ENCODE measurements at regions of chr13 and their contacts with region 1.

Region 1: GRCh38 chr13:111114362-111115060 is 599 bp upstream of the ARHGEF7 start:
- DNase-seq: peak; percentile 69 to 80
- ATAC-seq: peak; percentile 74 to 81 (median 78)
- H3K4me3 ChIP-seq: peak overlapping the region; percentile 87
- H3K27ac ChIP-seq: peak overlapping the region; percentile 90
- H3K4me1 ChIP-seq: peaks cover 3% of the 10 kb centered on the region
- H3K27me3 ChIP-seq: no peaks in the 10 kb centered on the region
- CTCF ChIP-seq: no peak

Region 2: DNA sequence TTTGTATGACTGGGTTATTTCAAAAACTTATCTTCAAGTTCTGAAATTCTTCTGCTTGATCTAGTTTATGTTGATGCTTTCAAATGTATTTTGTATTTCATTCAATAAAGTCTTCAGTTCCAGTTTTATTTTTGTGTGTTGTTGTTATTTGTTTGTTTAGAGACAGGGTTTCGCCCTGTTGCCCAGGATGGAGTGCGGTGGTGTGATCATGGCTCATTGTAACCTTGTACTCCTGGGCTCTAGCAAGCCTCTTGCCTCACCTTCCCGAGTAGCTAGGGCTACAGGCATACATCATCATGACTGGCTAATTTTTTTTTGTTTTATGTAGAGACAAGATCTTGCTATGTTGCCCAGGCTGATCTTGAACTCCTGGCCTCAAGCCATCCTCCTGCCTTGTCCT is 39.7 kb before region 1 on chr13:
- intact Hi-C with region 1: loop called in 1 of 2 experiments (anchors 5 kb)
- DNase-seq: no peak
- ATAC-seq: no peak
- H3K4me3 ChIP-seq: no peak overlapping the region
- H3K27ac ChIP-seq: no peak overlapping the region
- H3K4me1 ChIP-seq: no peaks in the 10 kb centered on the region
- H3K27me3 ChIP-seq: peaks cover 0 to 2% (median 0%) of the 10 kb centered on the region in 3 donors
- CTCF ChIP-seq: no peak

Region 3: DNA sequence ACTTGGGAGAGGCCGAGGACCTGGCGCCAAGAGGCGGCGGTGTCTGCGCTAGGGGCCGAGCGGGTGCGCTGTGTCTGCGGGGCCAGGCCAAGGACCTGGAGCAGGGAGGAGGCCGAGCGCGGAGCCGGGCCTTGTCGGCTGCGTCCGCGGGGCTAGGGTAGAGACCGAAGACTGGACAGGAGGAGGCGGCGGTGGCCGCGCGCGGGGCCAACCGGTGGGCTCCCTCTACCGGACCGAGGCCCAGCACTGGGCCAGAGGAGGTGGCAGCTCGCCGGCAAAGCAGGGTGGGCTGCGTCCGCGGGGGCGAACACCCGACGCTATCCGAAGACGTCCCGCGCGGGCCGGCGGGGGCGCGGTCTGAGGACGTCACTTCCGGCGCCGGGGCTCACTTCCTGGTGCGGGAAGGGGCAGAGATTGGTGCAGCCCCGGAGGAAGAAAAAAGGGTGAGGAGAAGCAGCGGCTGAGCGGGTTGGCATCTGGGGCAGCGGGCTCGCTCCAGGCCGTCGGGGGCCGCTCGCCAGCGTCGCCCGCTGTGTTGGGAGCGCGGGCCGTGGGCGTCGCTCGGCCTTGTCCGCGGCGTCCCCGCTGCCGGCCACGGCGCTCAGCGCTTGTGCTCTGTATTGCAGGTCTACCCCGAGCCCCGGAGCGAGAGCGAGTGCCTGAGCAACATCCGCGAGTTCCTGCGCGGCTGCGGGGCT is 38.9 kb after region 1 on chr13:
- intact Hi-C with region 1: loop called in 1 of 2 experiments (anchors 5 kb)
- DNase-seq: peak; percentile 95 to 97
- ATAC-seq: peak; percentile 96
- H3K4me3 ChIP-seq: peak overlapping the region; percentile 83
- H3K27ac ChIP-seq: peak overlapping the region; percentile 96
- H3K4me1 ChIP-seq: peaks cover 33% of the 10 kb centered on the region
- H3K27me3 ChIP-seq: no peaks in the 10 kb centered on the region
- CTCF ChIP-seq: peak; percentile 2

Region 4: GRCh38 chr13:111204438-111205177 is 90.1 kb after region 1 on chr13:
- intact Hi-C with region 1: loop called in 1 of 2 experiments (anchors 1 kb)
- DNase-seq: peak; percentile 60 to 75
- ATAC-seq: peak; percentile 42 to 60 (median 48)
- H3K4me3 ChIP-seq: peak overlapping the region; percentile 56
- H3K27ac ChIP-seq: peak overlapping the region; percentile 57
- H3K4me1 ChIP-seq: peaks cover 74% of the 10 kb centered on the region
- H3K27me3 ChIP-seq: no peaks in the 10 kb centered on the region
- CTCF ChIP-seq: no peak